A549 (cell line): ENCODE measurements at regions of chr6 and their contacts with region 1.

Region 1: DNA sequence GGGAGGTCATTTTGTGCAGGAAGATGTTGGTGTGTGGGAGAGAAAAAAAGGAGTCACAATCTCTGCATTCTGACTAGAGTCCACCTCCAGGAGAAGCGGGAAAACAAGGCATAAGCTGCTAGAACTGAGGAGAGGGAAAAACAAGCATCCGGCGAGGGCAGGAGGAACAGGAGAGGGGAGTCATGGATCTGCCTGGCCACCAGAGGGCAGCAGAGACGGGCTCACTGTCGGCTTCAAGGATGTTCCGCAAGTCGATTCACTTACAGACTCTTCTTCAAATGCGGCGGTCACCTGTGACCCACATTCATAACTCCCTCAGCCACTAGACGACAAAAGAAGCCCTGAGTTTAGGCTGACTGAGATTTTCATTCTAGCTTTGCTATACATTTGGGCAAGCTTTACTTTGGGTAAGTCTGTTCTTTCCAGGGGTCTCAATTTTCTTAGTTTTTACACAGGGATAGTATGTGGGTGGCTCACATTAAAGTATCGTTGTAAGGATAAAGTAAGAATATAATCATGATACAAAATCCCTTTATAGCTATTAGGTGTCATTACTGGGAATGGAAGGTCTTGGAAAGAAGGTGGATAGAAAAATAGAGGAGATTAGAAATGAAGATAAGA is 6.6 kb upstream of the BTNL2 start:
- DNase-seq: peak; percentile 37 to 72
- ATAC-seq: peak; percentile 87 to 95
- H3K4me3 ChIP-seq: no peak overlapping the region
- H3K27ac ChIP-seq: no peak overlapping the region
- H3K4me1 ChIP-seq: no peaks in the 10 kb centered on the region
- CTCF ChIP-seq: peak; percentile 74
- EP300 ChIP-seq: no peak
- POLR2A ChIP-seq: no peak
- RAD21 ChIP-seq: peak; percentile 70 to 77

Region 2: GRCh38 chr6:32397252-32397920 is 16.2 kb before region 1 on chr6:
- CTCF ChIA-PET with region 1: interaction called, 22 read pairs
- POLR2A ChIA-PET with region 1: no interaction called
- DNase-seq: no peak
- ATAC-seq: no peak
- H3K4me3 ChIP-seq: no peak overlapping the region
- H3K27ac ChIP-seq: no peak overlapping the region
- H3K4me1 ChIP-seq: no peaks in the 10 kb centered on the region
- CTCF ChIP-seq: no peak
- EP300 ChIP-seq: no peak
- POLR2A ChIP-seq: no peak
- RAD21 ChIP-seq: no peak

Region 3: DNA sequence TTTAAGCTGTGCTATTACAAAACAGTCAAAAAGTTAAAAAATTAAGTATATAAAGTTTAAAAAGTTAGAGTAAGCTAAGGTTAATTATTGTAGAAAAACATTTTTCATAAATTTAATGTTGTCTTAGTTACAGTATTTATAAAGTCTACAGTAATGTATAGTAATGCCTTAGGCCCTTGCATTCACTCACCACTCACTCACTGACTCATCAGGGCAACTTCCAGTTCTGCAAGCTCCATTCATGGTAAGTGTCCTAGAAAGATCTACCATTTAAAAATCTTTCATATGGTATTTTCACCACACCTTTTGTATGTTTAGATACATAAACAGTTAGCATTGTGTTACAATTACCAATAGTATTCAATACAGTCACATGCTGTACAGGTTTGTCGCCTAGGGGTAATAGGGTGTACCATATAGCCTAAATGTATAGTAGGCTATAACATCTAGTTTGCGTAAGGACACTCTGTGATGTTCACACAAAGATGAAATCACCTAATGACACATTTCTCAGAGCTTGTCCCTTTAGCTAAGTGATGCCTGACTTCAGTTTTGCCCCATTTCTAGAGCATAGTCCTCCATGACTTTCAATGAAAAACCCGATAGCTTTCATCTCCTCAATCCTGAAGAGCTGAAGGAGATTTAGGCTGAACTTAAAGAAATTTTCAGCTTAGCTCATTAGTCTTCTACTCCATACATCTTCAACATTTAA is 11.2 kb after region 1 on chr6:
- CTCF ChIA-PET with region 1: interaction called, 23 read pairs
- POLR2A ChIA-PET with region 1: no interaction called
- DNase-seq: no peak
- ATAC-seq: no peak
- H3K4me3 ChIP-seq: no peak overlapping the region
- H3K27ac ChIP-seq: no peak overlapping the region
- H3K4me1 ChIP-seq: no peaks in the 10 kb centered on the region
- CTCF ChIP-seq: no peak
- EP300 ChIP-seq: no peak
- POLR2A ChIP-seq: no peak
- RAD21 ChIP-seq: no peak

Region 4: DNA sequence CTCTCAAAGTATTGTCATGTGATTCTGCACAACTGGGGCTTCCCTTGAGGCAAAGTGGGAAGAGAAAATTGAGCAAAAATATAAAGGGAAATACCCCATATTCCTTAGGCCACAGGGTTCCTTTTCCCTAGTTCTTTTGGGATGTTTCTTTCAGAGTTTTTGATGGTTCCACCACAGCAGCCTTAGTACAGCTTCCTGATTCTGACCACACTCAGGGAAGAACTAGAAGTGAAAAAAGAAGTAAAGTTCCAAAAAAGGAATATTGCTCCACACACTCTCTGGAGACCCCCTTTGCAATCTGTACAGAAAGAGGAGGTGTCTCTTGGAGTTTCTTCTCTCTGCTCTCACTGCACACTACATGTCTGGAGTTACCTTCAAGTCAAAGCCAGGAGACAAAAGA is 299.7 kb after region 1 on chr6:
- CTCF ChIA-PET with region 1: interaction called, 10 read pairs
- POLR2A ChIA-PET with region 1: no interaction called
- DNase-seq: no peak
- ATAC-seq: no peak
- H3K4me3 ChIP-seq: no peak overlapping the region
- H3K27ac ChIP-seq: no peak overlapping the region
- H3K4me1 ChIP-seq: no peaks in the 10 kb centered on the region
- CTCF ChIP-seq: no peak
- EP300 ChIP-seq: no peak
- POLR2A ChIP-seq: no peak
- RAD21 ChIP-seq: no peak

Region 5: DNA sequence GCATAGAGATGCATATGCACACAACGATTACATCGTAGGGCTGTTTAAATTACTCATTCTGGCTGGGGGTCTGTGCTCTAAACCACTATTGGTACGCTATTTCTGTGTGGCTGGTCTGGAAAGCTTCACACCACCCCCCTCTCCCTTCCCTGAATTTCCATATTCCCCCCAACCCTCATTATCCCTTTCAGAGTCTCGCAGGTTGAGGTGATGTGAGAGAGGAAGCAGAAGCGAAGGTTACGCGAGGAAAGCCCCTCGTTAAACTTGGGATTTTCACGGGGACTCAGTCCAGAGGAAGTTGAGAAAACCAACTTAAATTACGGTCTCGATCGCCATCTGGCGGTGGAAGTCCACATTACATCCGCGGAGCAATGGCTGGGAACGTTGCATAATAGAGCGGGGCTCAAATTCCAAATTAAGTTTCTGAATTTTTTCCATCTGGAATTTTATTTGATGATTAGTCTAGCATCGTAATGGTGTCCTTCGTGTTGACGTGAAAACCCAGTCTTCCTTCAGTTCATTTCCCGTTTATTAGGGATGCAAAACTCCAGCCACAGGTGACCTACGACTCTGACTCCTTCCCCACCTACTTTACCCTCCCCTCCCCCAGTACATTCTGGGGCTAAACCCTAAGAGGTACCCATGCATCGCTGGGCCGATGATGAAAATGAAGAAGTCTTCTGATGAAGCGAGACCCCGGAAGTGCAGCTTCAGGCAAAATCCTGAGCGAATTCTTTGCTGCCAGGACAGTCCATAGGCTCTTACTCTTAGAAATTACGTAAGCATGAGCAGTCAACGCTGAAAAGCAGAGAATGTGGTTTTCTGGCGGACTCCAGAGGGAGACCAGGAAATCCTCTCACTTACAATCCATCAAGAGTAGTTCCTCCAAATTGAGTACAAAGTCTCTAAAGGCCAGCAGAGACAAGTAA is 383.6 kb after region 1 on chr6:
- CTCF ChIA-PET with region 1: interaction called, 16 read pairs
- POLR2A ChIA-PET with region 1: no interaction called
- DNase-seq: peak; percentile 34 to 43
- ATAC-seq: peak; percentile 66 to 74; a peak in 5 of 6 replicates
- H3K4me3 ChIP-seq: 0 out of 3 replicates have a peak overlapping the region, but pooled peaks have one; percentile 19
- H3K27ac ChIP-seq: no peak overlapping the region
- H3K4me1 ChIP-seq: no peaks in the 10 kb centered on the region
- CTCF ChIP-seq: peak; percentile 67
- EP300 ChIP-seq: no peak
- POLR2A ChIP-seq: no peak
- RAD21 ChIP-seq: peak; percentile 71 to 73